HCT116 (cell line): ENCODE measurements at regions of chr17 and their contacts with region 1.

Region 1: GRCh38 chr17:66508896-66509843 is 206.8 kb downstream of the PRKCA start:
- DNase-seq: peak; percentile 90
- ATAC-seq: peak; percentile 86
- H3K4me3 ChIP-seq: peak overlapping the region in 1 of 2 experiments; percentile 35; a peak in 2 of 4 replicates
- H3K27ac ChIP-seq: peak overlapping the region; percentile 64
- H3K4me1 ChIP-seq: peaks cover 42 to 46% of the 10 kb centered on the region in 2 experiments
- H3K27me3 ChIP-seq: peaks cover 5% of the 10 kb centered on the region; the same call in 1 of the 2 replicates
- CTCF ChIP-seq: no peak
- POLR2A ChIP-seq: no peak
- RAD21 ChIP-seq: peak; percentile 37

Region 2: DNA sequence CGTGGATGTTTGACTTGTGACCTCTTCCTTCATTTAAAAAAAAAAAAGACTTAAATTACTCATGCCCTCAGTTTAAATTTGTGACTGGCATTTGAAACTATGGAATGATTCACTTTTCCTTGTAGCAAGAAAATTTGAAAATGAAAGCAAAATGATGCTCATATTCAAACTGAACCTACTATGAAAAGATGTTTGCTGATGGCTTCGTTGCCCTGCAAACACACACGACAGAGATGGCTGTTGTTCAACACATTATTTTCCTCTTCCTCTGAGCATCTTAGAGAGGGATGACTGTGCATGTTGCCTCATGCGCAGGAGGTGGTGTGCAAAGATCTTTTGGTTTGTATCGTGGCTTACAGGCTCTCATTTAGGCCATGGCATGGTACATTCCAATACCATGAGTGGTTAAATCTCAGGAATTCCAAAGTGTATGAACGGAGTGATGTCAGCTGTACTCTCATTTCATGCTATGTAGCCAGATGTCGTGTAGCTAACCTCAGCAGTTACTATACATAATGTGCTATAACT is 42.3 kb before region 1 on chr17:
- CTCF ChIA-PET with region 1: no interaction called
- POLR2A ChIA-PET with region 1: interaction called, 10 read pairs
- RAD21 ChIA-PET with region 1: no interaction called
- intact Hi-C with region 1: no loop called
- DNase-seq: peak; percentile 92
- ATAC-seq: peak; percentile 97
- H3K4me3 ChIP-seq: peak overlapping the region; percentile 15 to 21
- H3K27ac ChIP-seq: peak overlapping the region; percentile 33; the same call in 1 of the 2 replicates
- H3K4me1 ChIP-seq: peaks cover 37 to 58% of the 10 kb centered on the region in 2 experiments
- H3K27me3 ChIP-seq: no peaks in the 10 kb centered on the region
- CTCF ChIP-seq: no peak
- POLR2A ChIP-seq: no peak
- RAD21 ChIP-seq: no peak; the same call in 1 of the 2 replicates

Region 3: DNA sequence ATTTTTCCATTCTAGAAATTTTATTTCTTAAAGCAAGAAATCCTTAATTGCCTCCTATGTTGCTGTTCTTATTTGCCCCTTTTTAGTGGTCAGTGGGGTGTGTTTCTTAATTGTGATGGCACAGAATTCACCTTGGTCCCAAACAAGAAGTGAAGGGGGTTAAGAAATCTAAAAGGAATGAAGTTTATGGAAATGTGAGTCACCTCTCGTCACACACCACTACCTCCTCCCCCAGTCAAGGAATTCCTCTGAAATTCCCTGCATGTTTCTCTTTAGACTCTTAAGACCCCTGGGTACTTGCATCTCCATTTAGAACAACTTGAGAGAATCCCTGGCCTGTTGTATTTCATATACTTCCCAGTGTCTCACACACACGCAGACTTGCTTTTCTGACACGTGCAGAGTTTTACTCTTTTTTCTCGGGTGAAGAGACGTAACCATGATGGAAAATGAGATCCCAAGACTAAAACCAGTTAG is 40.6 kb after region 1 on chr17:
- CTCF ChIA-PET with region 1: interaction called, 4 read pairs
- POLR2A ChIA-PET with region 1: no interaction called
- RAD21 ChIA-PET with region 1: no interaction called
- intact Hi-C with region 1: loop called (anchors 5 kb)
- DNase-seq: peak; percentile 44
- ATAC-seq: peak; percentile 18
- H3K4me3 ChIP-seq: peak overlapping the region in 1 of 2 experiments; percentile 50; a peak in 2 of 4 replicates
- H3K27ac ChIP-seq: peak overlapping the region; percentile 61
- H3K4me1 ChIP-seq: peaks cover 50 to 51% of the 10 kb centered on the region in 2 experiments
- H3K27me3 ChIP-seq: no peaks in the 10 kb centered on the region
- CTCF ChIP-seq: no peak
- POLR2A ChIP-seq: no peak
- RAD21 ChIP-seq: no peak